Sigmoid colon (tissue), 7 donors: ENCODE measurements at regions of chr11 and their contacts with region 1.

Region 1: GRCh38 chr11:11798586-11799438 is 43.0 kb upstream of the USP47 start:
- DNase-seq: peak; percentile 92
- H3K4me3 ChIP-seq: no peak overlapping the region
- H3K27ac ChIP-seq: no peak overlapping the region
- H3K4me1 ChIP-seq: no peaks in the 10 kb centered on the region
- H3K27me3 ChIP-seq: no peaks in the 10 kb centered on the region
- CTCF ChIP-seq: peak; percentile 61 to 89 (median 84)
- EP300 ChIP-seq: no peak
- POLR2A ChIP-seq: no peak

Region 2: DNA sequence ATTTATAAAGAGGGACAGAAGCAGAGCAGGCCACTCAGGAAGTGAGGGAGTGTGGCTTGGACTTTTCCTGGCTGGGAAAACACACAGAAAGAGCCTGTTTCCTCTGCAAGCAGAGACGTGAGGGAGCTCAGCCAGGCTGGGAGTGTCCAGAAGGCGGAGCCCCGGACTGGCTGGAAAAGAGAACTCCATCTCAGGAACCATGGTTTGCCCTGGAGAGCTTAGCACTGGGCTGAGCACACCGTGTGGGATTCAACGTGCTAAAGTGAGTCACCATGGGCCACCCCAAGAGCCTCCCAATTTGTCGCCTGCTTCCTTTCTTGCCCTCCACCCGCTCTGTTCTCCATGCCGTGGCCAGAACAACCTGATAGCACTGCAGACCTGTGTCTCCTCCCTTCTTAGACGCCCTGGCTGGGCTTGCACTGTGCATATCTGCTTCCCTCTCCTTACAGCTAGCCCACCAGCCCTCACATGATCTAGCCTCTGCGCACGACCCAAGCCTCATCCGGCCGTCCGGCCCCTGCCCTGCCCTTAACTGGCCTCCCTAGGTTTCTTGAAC is 228.8 kb before region 1 on chr11:
- intact Hi-C with region 1: no loop called
- DNase-seq: peak; percentile 81
- H3K4me3 ChIP-seq: no peak overlapping the region
- H3K27ac ChIP-seq: peak overlapping the region; percentile 58 to 88 (median 71)
- H3K4me1 ChIP-seq: peaks cover 0 to 90% (median 63%) of the 10 kb centered on the region in 4 donors
- H3K27me3 ChIP-seq: no peaks in the 10 kb centered on the region
- CTCF ChIP-seq: no peak
- EP300 ChIP-seq: no peak
- POLR2A ChIP-seq: no peak

Region 3: DNA sequence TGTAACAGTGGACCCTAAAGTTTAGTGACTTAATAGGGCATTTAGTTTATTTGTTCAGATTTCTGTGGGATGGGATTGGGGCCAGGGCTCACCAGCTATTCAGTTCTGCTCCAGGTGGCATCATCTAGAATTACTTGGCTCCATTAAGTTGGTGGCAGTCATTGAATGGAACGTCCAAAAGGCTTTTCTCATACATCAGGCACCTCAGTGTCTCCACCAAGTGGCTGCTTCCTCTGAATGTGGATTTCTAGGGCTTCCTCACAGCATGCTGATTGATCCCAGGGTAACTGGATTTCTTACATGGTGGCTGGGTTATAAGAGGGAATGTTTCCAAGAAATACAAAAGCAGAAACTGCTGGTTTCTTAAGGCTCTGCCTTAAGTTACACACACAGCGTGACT is 77.6 kb after region 1 on chr11:
- intact Hi-C with region 1: no loop called
- DNase-seq: no peak
- H3K4me3 ChIP-seq: no peak overlapping the region
- H3K27ac ChIP-seq: no peak overlapping the region
- H3K4me1 ChIP-seq: peaks cover 4 to 46% (median 20%) of the 10 kb centered on the region in 4 donors
- H3K27me3 ChIP-seq: no peaks in the 10 kb centered on the region
- CTCF ChIP-seq: no peak
- EP300 ChIP-seq: no peak
- POLR2A ChIP-seq: no peak

Region 4: DNA sequence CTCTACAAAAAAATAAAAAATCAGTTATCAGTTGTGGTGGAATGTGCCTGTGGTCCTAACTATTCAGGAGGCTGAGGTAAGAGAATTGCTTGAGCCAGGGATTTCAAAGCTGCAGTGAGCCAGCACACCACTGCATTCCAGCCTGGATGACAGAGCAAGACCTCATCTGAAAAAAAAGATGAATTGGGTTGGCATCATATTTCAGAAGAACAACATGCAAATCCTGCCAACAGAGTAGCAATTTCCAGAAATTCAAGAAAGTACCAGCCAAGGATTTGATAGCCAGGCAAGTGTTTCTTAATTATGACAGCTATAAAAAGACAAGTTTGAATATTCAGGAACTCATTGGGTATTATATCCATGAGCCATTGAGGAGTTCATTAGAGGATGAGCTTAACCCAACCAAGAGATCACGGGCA is 118.2 kb after region 1 on chr11:
- intact Hi-C with region 1: loop called (anchors 10 kb)
- DNase-seq: no peak
- H3K4me3 ChIP-seq: no peak overlapping the region
- H3K27ac ChIP-seq: peak overlapping the region in 3 of 4 donors; percentile 30 to 48 (median 43)
- H3K4me1 ChIP-seq: peaks cover 0 to 17% (median 9%) of the 10 kb centered on the region in 4 donors
- H3K27me3 ChIP-seq: no peaks in the 10 kb centered on the region
- CTCF ChIP-seq: no peak
- EP300 ChIP-seq: no peak
- POLR2A ChIP-seq: no peak

Region 5: GRCh38 chr11:12281571-12282478 is 483.0 kb after region 1 on chr11:
- intact Hi-C with region 1: loop called (anchors 5 kb)
- DNase-seq: peak; percentile 92
- H3K4me3 ChIP-seq: no peak overlapping the region
- H3K27ac ChIP-seq: peak overlapping the region in 1 of 4 donors; percentile 13
- H3K4me1 ChIP-seq: peaks cover 0 to 39% (median 29%) of the 10 kb centered on the region in 4 donors
- H3K27me3 ChIP-seq: no peaks in the 10 kb centered on the region
- CTCF ChIP-seq: peak; percentile 95 to 99 (median 99)
- EP300 ChIP-seq: no peak
- POLR2A ChIP-seq: no peak